OCI-LY7 (cell line): ENCODE measurements at regions of chr4 and their contacts with region 1.

Region 1: GRCh38 chr4:122577808-122578781 is 42.8 kb downstream of the IL21 start:
- DNase-seq: peak; percentile 48
- H3K4me3 ChIP-seq: no peak overlapping the region
- H3K27ac ChIP-seq: no peak overlapping the region
- H3K4me1 ChIP-seq: no peaks in the 10 kb centered on the region
- CTCF ChIP-seq: peak; percentile 84

Region 2: GRCh38 chr4:121126449-121127006 is 1451.6 kb before region 1 on chr4:
- CTCF ChIA-PET with region 1: no interaction called
- POLR2A ChIA-PET with region 1: no interaction called
- intact Hi-C with region 1: no loop called
- DNase-seq: no peak
- H3K4me3 ChIP-seq: no peak overlapping the region
- H3K27ac ChIP-seq: no peak overlapping the region
- H3K4me1 ChIP-seq: no peaks in the 10 kb centered on the region
- CTCF ChIP-seq: no peak

Region 3: GRCh38 chr4:121900132-121900983 is 677.7 kb before region 1 on chr4:
- CTCF ChIA-PET with region 1: interaction called, 6 read pairs
- POLR2A ChIA-PET with region 1: no interaction called
- intact Hi-C with region 1: loop called (anchors 1 kb)
- DNase-seq: peak; percentile 65
- H3K4me3 ChIP-seq: no peak overlapping the region
- H3K27ac ChIP-seq: no peak overlapping the region
- H3K4me1 ChIP-seq: no peaks in the 10 kb centered on the region
- CTCF ChIP-seq: peak; percentile 92

Region 4: DNA sequence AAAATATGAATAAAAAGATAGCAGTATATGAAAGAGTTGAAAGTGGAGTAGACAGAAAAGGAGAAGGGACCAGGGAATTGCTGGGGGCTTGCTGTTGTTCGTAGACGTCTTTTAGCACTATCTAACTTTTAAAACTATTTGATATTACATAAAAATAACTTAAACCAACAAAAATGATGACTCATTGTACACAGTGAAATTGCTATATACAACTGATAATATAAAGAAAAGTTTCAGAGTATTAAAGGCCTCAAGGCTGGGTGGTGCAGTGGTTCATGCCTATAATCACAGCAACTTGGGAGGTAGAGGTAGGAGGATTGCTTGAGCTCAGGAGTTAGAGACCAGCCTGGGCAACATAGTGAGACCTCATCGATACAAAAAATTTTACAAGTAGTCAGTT is 631.5 kb before region 1 on chr4:
- CTCF ChIA-PET with region 1: no interaction called
- POLR2A ChIA-PET with region 1: no interaction called
- intact Hi-C with region 1: loop called (anchors 5 kb)
- DNase-seq: no peak
- H3K4me3 ChIP-seq: no peak overlapping the region
- H3K27ac ChIP-seq: no peak overlapping the region
- H3K4me1 ChIP-seq: peaks cover 2% of the 10 kb centered on the region
- CTCF ChIP-seq: no peak

Region 5: DNA sequence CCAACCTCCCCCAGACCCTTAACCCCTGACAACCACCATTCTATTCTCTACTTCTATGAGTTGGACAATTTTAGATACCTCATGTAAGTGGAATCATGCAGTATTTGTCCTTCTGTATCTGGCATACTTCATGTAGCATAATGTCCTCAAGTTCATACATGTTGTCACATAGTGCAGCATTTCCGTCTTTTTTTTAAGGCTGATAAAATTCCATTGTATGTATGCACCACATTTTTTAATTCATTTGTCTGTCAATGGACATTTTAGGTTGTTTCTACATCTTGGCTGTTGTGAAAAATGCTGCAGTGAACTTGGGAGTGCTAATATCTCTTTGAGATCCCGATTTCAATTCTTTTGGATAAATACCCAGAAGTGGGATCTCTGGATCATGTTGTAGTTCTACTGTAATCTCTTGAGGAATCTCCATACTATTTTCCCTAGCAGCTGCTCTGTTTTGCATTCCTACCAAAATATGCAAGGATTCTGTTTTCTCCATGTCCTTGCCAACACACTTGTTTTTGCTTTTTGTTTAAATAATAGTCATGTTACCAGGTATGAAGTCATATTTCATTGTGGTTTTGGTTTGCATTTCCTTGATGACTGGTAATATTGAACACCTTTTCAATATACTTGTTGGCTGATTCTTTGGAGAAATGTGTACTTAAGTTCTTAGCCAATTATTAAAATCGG is 248.1 kb before region 1 on chr4:
- CTCF ChIA-PET with region 1: no interaction called
- POLR2A ChIA-PET with region 1: no interaction called
- intact Hi-C with region 1: loop called (anchors 10 kb)
- DNase-seq: no peak
- H3K4me3 ChIP-seq: no peak overlapping the region
- H3K27ac ChIP-seq: no peak overlapping the region
- H3K4me1 ChIP-seq: no peaks in the 10 kb centered on the region
- CTCF ChIP-seq: no peak

Region 6: GRCh38 chr4:122423246-122423645 is 154.8 kb before region 1 on chr4:
- CTCF ChIA-PET with region 1: no interaction called
- POLR2A ChIA-PET with region 1: no interaction called
- intact Hi-C with region 1: no loop called
- DNase-seq: no peak
- H3K4me3 ChIP-seq: no peak overlapping the region
- H3K27ac ChIP-seq: no peak overlapping the region
- H3K4me1 ChIP-seq: no peaks in the 10 kb centered on the region
- CTCF ChIP-seq: no peak

Region 7: DNA sequence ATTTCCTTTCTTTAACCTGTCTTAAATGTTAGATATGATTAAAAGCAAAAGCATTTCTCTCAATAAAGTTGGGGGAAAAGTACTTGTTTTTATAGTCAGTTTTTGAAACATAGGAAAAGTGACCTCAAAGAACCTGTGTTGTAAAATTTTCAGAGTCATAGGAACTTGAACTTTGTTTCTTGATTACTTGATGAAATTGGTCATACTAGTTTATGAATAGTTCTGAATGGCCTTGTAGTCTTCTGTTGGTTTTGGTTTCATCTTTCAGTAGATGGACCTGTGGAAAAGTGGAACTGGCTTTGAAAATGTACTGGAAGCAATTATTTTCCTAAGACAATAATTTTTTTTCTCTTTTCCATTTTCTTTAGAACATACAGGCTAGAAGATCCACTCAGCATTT is 566.5 kb after region 1 on chr4:
- CTCF ChIA-PET with region 1: no interaction called
- POLR2A ChIA-PET with region 1: no interaction called
- intact Hi-C with region 1: no loop called
- DNase-seq: no peak
- H3K4me3 ChIP-seq: no peak overlapping the region
- H3K27ac ChIP-seq: no peak overlapping the region
- H3K4me1 ChIP-seq: no peaks in the 10 kb centered on the region
- CTCF ChIP-seq: no peak